Activated T-helper 2 cell treated with anti-CD3 and anti-CD28 coated beads, Interferon-gamma antibody, Interleukin-2, Interleukin-4, amounts not matched to agents 10 μg/mL and 5 μg/mL and 100 μg/mL, durations not matched to agents 14 hours and 24 hours and 36 hours (primary cell): ENCODE measurements at regions of chr1 and their contacts with region 1.

Region 1: DNA sequence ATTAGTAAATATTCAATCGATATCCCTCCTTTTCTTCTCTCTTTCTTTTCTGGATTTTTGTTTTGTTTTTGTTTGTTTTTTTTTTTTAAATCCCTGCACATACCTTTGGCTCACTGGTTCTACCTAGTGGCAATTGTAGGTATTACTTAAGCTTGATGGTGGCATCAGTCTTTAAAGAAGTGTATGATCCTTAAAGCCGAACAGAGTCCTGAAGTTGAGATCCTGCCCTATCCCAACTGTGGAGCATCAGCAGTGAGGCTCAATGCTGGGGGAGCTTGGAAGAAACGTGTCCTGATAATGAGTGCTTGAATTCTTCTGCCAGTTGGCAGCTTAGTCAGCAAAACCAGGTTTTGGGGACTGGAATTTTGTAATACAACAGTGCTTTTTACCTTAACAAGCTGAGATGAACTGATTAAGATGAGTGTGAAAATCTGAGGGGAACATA is 60.8 kb downstream of the FASLG start:
- DNase-seq: no peak
- H3K4me3 Mint-ChIP-seq: no peak overlapping the region
- H3K27ac Mint-ChIP-seq: no peak overlapping the region
- H3K4me1 Mint-ChIP-seq: peaks cover 47% of the 10 kb centered on the region
- H3K27me3 Mint-ChIP-seq: no peaks in the 10 kb centered on the region

Region 2: GRCh38 chr1:172532700-172533509 is 186.8 kb before region 1 on chr1 and contains the start of gene SUCO:
- intact Hi-C with region 1: loop called (anchors 5 kb)
- DNase-seq: peak; percentile 100
- H3K4me3 Mint-ChIP-seq: peak within 1 kb of the TSS; percentile 95
- H3K27ac Mint-ChIP-seq: peak within 1 kb of the TSS; percentile 99
- H3K4me1 Mint-ChIP-seq: peaks cover 38% of the 10 kb centered on the region
- H3K27me3 Mint-ChIP-seq: peaks cover 9% of the 10 kb centered on the region
- total RNA-seq, gene SUCO: 28.2 and 33.3 TPM in 2 replicates

Region 3: DNA sequence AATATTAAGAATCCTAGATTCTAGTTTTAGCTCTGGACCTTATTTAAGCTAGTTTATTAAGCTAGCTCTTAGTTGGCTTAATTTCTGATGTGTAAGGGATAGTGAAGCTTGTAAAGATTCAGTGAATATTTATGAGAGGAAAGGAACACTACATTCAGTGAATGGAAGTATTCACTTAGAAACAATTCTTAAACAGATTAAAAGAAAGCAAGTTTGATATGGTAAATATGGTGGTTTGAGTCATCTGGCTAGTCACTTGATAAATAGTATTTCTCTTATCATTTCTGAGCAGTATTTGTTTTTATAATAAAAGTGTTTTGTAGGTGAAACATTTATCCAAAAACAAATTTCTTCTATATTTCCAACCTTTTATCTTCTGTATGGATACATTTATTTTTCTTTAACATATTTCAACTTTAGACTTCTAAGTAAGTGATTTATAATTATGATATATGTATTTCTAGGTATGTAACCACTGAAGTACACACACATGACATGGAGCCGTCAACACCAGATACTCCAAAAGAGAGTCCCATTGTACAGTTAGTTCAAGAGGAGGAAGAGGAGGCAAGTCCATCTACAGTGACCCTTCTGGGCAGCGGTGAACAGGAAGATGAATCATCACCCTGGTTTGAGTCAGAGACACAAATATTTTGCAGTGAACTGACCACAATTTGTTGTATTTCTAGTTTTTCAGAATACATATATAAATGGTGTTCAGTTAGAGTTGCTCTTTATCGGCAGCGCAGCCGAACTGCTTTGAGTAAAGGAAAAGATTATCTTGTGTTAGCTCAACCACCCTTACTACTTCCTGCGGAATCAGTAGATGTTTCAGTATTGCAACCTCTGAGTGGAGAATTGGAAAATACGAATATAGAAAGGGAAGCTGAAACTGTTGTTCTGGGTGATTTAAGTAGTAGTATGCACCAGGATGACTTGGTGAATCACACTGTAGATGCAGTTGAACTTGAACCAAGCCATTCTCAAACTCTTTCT is 131.1 kb before region 1 on chr1:
- intact Hi-C with region 1: loop called (anchors 5 kb)
- DNase-seq: no peak
- H3K4me3 Mint-ChIP-seq: no peak overlapping the region
- H3K27ac Mint-ChIP-seq: peak overlapping the region; percentile 72
- H3K4me1 Mint-ChIP-seq: peaks cover 28% of the 10 kb centered on the region
- H3K27me3 Mint-ChIP-seq: no peaks in the 10 kb centered on the region

Region 4: GRCh38 chr1:172609528-172609927 is 110.2 kb before region 1 on chr1:
- intact Hi-C with region 1: loop called (anchors 1 kb)
- DNase-seq: no peak
- H3K4me3 Mint-ChIP-seq: no peak overlapping the region
- H3K27ac Mint-ChIP-seq: no peak overlapping the region
- H3K4me1 Mint-ChIP-seq: peaks cover 13% of the 10 kb centered on the region
- H3K27me3 Mint-ChIP-seq: no peaks in the 10 kb centered on the region

Region 5: DNA sequence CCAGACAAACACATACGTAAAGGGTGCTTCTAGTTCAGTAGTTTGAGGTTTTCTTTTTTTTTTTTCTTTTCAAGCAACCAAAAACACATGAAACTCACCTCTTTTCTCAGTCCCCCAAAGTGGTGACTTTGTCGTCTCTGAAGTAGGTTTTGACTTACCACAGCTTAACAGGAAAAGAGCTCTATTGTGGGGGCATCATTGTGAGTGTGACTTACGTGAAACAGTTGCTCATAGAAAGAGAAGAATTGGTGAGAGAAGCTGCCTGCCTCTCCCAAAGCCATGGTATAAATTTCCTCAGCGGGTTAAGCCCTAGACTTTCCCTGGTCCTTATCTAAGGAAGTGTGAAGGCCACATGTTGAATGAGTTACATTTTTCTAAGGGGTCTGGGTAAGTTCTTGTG is 48.9 kb before region 1 on chr1:
- intact Hi-C with region 1: loop called (anchors 2 kb)
- DNase-seq: no peak
- H3K4me3 Mint-ChIP-seq: no peak overlapping the region
- H3K27ac Mint-ChIP-seq: peak overlapping the region; percentile 61
- H3K4me1 Mint-ChIP-seq: peaks cover 77% of the 10 kb centered on the region
- H3K27me3 Mint-ChIP-seq: no peaks in the 10 kb centered on the region